AG04450 (cell line): ENCODE measurements at regions of chr5 and their contacts with region 1.

Region 1: DNA sequence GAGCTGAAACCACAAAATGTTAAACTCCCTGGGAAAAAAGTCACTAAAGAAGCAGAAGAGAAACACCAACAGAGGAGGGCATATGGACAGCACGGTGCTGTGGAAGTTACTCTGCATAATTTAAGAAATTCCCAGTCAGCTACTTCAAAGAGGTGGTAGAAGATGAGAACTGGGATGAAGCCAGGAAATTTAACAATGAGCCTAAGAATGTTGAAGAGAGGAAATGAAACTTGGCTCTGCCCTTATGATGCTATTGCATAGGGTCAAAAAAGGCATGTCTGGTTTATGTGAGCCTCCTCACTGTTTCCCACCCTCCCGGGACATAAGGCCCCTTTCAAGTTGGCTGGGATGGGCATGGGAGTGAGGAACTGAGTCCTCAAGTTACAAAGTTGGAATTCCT is 25.4 kb upstream of the SNX18 start:
- DNase-seq: no peak
- H3K4me3 ChIP-seq: no peak overlapping the region
- H3K27ac ChIP-seq: no peak overlapping the region
- H3K27me3 ChIP-seq: peaks cover 8% of the 10 kb centered on the region
- CTCF ChIP-seq: no peak

Region 2: DNA sequence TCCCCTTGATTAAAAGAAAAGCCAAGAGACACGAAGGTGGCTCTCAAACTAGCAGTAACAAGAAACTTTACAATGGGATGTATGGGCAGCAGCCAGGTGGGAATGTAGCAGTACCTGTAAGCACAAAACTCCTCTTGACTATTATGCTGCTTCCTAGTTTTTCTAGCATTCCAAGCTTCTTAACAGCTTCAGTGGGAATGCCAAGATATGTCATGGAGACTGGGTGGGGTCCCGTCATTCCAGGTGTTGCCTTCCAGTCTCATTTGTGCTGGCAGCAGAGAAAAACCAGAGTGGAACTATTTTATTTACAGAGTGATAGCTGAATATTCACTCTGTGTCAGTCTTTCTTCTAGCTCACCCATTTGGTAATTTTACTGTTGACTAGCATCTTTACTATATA is 418.4 kb before region 1 on chr5:
- CTCF ChIA-PET with region 1: no interaction called
- POLR2A ChIA-PET with region 1: no interaction called
- DNase-seq: no peak
- H3K4me3 ChIP-seq: no peak overlapping the region
- H3K27ac ChIP-seq: no peak overlapping the region
- H3K27me3 ChIP-seq: no peaks in the 10 kb centered on the region
- CTCF ChIP-seq: no peak

Region 3: GRCh38 chr5:54234304-54234933 is 257.8 kb before region 1 on chr5:
- CTCF ChIA-PET with region 1: interaction called, 29 read pairs
- POLR2A ChIA-PET with region 1: no interaction called
- DNase-seq: peak; percentile 26
- H3K4me3 ChIP-seq: no peak overlapping the region
- H3K27ac ChIP-seq: no peak overlapping the region
- H3K27me3 ChIP-seq: no peaks in the 10 kb centered on the region
- CTCF ChIP-seq: peak; percentile 69

Region 4: GRCh38 chr5:54310433-54311175 is 181.6 kb before region 1 on chr5 and contains the start of gene ARL15:
- CTCF ChIA-PET with region 1: interaction called, 18 read pairs
- POLR2A ChIA-PET with region 1: interaction called, 14 read pairs
- DNase-seq: peak; percentile 93
- H3K4me3 ChIP-seq: peak within 1 kb of the TSS; percentile 88
- H3K27ac ChIP-seq: peak within 1 kb of the TSS; percentile 81
- H3K27me3 ChIP-seq: peaks cover 3% of the 10 kb centered on the region
- CTCF ChIP-seq: no peak
- polyA plus RNA-seq, gene ARL15: 16.0 and 17.1 TPM in 2 replicates

Region 5: GRCh38 chr5:54443270-54443669 is 48.9 kb before region 1 on chr5:
- CTCF ChIA-PET with region 1: interaction called, 182 read pairs
- POLR2A ChIA-PET with region 1: no interaction called
- DNase-seq: peak; percentile 24
- H3K4me3 ChIP-seq: no peak overlapping the region
- H3K27ac ChIP-seq: no peak overlapping the region
- H3K27me3 ChIP-seq: peaks cover 23% of the 10 kb centered on the region
- CTCF ChIP-seq: peak; percentile 70

Region 6: GRCh38 chr5:54469622-54470021 is 22.6 kb before region 1 on chr5:
- CTCF ChIA-PET with region 1: interaction called, 30 read pairs
- POLR2A ChIA-PET with region 1: interaction called, 12 read pairs
- DNase-seq: no peak
- H3K4me3 ChIP-seq: peak overlapping the region; percentile 23
- H3K27ac ChIP-seq: peak overlapping the region; percentile 77
- H3K27me3 ChIP-seq: no peaks in the 10 kb centered on the region
- CTCF ChIP-seq: no peak

Region 7: DNA sequence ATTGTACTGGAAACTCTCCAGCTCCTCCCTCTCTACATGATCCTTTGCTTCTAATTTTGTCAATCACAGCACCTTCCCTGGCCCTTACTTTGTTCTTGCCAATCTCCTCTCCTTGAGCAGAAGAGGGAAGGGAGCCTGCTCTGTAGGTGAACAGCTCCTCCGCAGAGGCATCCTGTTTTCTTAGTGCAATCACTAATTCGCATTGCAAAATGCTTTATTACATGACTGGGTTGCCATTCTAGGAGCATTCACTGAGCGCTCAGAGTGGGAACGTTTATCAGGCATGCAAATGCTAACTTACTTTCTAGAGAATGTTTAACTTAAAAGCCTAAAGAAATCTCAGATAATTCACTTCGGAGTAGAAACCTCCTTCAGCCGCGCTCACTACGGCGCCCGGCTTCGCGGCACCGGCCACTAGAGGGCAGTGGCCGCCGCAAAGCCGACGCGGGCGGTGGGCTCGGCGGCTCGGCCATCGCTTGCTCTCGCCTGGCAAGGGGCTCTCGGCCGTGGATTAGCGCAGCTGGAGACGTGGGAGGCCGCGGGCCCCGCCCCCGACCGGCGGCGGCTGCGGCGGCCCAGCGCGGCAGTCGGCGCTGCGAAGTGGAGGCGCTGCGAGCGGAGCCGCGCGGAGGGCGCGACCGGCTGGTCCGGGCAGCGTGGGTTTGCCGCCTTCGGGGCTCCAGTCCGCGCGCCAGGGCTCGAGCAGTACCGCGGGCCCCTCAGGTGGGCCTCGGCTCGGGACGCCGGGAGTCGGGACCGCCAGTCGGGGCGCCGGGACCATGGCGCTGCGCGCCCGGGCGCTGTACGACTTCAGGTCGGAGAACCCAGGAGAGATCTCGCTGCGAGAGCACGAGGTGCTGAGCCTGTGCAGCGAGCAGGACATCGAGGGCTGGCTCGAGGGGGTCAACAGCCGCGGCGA is 25.3 kb after region 1 on chr5 and contains the start of gene SNX18:
- CTCF ChIA-PET with region 1: interaction called, 14 read pairs
- POLR2A ChIA-PET with region 1: no interaction called
- DNase-seq: peak; percentile 86
- H3K4me3 ChIP-seq: peak within 1 kb of the TSS; percentile 68
- H3K27ac ChIP-seq: peak within 1 kb of the TSS; percentile 73
- H3K27me3 ChIP-seq: no peaks in the 10 kb centered on the region
- CTCF ChIP-seq: peak; percentile 92
- polyA plus RNA-seq, gene SNX18: 68.1 and 74.1 TPM in 2 replicates

Region 8: DNA sequence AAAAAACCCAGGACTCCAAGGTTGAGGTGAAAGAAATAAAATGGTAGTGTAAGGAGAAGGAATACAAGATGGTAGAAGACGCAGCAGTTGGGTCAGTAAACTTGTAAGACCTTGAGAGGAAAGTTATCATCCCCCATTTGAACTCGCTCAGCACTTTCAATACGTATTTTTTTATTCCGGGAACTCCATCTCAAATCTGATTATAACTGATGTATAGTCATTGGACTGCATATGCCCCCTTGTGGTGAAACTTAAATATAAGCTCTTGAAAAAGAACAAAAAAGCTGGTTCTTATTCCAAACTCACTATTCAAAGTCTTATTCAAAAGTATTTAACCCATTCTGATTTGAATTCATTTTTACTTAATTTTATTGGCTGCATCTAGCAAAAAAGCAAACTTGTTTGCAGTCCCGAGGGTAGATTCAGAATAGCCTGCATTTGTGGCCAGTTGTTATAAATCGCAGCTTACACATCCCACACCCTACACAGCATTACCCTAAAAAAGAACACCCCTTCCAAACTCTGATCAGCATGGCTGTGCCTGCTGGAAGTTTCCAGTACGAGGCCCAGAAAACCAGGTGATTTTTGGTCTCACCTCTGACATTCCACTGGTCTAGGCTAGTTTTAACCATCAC is 375.2 kb after region 1 on chr5:
- CTCF ChIA-PET with region 1: interaction called, 20 read pairs
- POLR2A ChIA-PET with region 1: no interaction called
- DNase-seq: no peak
- H3K4me3 ChIP-seq: no peak overlapping the region
- H3K27ac ChIP-seq: no peak overlapping the region
- H3K27me3 ChIP-seq: peaks cover 6% of the 10 kb centered on the region
- CTCF ChIP-seq: peak; percentile 62

Region 9: DNA sequence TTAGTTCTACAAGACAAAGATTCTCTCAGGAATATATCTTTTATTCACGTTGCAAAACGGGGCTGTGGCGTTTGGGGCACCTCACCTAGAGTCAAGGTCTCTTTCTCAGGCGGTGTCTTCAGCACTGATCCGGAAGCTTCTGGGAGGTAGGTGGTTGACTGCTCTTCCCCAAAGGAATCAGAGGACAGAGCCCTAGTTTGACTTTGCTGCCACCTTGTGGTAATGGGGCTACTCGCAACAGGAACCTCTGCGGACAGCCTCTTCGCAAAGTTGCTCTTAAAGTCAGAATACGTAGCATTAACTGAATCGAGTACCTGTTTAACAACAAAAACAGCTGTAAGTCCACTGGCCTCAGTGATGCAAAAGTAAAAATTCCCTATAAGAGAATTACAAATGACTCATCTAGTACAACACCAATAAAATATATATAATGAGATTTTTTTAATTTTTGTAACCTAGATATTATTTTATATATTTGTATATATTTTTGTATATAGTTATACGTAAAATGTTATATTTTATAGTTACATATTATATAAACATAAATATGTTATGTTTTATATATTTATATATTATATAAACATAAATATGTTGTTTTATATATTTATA is 654.5 kb after region 1 on chr5:
- CTCF ChIA-PET with region 1: no interaction called
- POLR2A ChIA-PET with region 1: no interaction called
- DNase-seq: peak; percentile 67
- H3K4me3 ChIP-seq: no peak overlapping the region
- H3K27ac ChIP-seq: no peak overlapping the region
- H3K27me3 ChIP-seq: peaks cover 12% of the 10 kb centered on the region
- CTCF ChIP-seq: peak; percentile 99